ENCODE measurements at regions of chr1 and their contacts with region 1.

Region 1: DNA sequence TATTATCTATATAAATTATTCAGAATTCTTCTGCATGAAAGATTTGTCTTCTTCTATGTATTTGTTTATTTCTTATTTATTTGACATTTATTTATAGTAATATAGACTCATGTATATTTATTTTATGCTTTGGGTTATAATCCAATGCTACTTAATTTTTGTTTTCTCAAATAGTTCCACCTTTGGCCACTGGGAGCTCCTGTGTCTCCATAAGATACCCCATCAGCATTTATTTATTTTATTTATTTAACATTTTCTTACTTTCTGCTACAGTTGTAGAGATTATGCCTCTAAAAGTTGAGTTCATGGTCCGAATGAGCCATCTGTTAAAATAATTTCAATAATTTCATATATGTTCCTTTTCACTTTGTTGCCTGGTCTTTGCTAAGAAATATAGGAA is 289.4 kb downstream of the ADGRL2 start:
- DNase-seq: no peak
- H3K4me3 ChIP-seq: no peak overlapping the region
- H3K27ac ChIP-seq: no peak overlapping the region
- H3K4me1 ChIP-seq: no peaks in the 10 kb centered on the region
- H3K27me3 ChIP-seq: no peaks in the 10 kb centered on the region
- CTCF ChIP-seq: peak in 1 of 3 experiments; percentile 5; a peak in 1 of 4 replicates
- EP300 ChIP-seq: no peak
- POLR2A ChIP-seq: no peak
- RAD21 ChIP-seq: peak; percentile 20 to 44; a peak in 2 of 4 replicates

Region 2: DNA sequence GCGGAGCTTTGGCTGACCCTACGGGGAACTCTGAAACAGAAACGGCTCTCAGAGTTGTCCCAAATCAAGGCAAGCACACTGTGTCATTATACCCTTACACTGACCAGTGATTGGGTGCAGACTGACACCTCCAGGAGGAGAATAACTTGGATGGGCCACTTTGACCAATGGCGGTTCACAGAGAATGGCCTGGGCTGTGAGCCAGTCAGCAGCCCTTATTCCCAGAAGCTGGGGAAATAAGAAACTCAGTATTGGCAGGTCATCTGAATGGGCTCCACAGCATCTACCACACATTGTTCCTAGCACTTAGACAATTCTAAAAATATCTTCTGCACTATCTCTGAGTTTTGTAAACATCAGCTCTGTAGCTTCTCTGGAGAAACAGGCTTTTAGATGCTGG is 24.2 kb before region 1 on chr1:
- CTCF ChIA-PET with region 1: interaction called, 15 read pairs
- POLR2A ChIA-PET with region 1: no interaction called
- DNase-seq: no peak
- H3K4me3 ChIP-seq: no peak overlapping the region
- H3K27ac ChIP-seq: no peak overlapping the region
- H3K4me1 ChIP-seq: no peaks in the 10 kb centered on the region
- H3K27me3 ChIP-seq: peaks cover 0 to 1% (median 0%) of the 10 kb centered on the region in 4 experiments; a peak in 1 of 7 replicates
- CTCF ChIP-seq: no peak
- EP300 ChIP-seq: no peak
- POLR2A ChIP-seq: no peak
- RAD21 ChIP-seq: no peak

Region 3: GRCh38 chr1:82079607-82080006 is 10.5 kb before region 1 on chr1:
- CTCF ChIA-PET with region 1: interaction called, 59 read pairs
- POLR2A ChIA-PET with region 1: interaction called, 7 read pairs
- DNase-seq: no peak
- H3K4me3 ChIP-seq: no peak overlapping the region
- H3K27ac ChIP-seq: no peak overlapping the region
- H3K4me1 ChIP-seq: peaks cover 0 to 3% (median 0%) of the 10 kb centered on the region in 4 experiments; a peak in 1 of 7 replicates
- H3K27me3 ChIP-seq: no peaks in the 10 kb centered on the region
- CTCF ChIP-seq: no peak
- EP300 ChIP-seq: no peak
- POLR2A ChIP-seq: no peak
- RAD21 ChIP-seq: no peak

Measured in H1 (cell line).